Right ventricle myocardium inferior (tissue), 1 donor: ENCODE measurements at regions of chr2 and their contacts with region 1.

Region 1: GRCh38 chr2:55718165-55719008 is 24.7 kb upstream of the PNPT1 start:
- DNase-seq: no peak
- ATAC-seq: no peak

Region 2: GRCh38 chr2:56009758-56010458 is 291.5 kb after region 1 on chr2:
- intact Hi-C with region 1: loop called (anchors 2 kb)
- DNase-seq: no peak
- ATAC-seq: no peak

Region 3: GRCh38 chr2:56132138-56132537 is 413.8 kb after region 1 on chr2:
- intact Hi-C with region 1: loop called (anchors 2 kb)
- DNase-seq: no peak
- ATAC-seq: no peak

Region 4: GRCh38 chr2:56183643-56184499 is 465.5 kb after region 1 on chr2 and contains the start of gene CCDC85A:
- intact Hi-C with region 1: no loop called
- DNase-seq: peak; percentile 87
- ATAC-seq: peak; percentile 95
- total RNA-seq, gene CCDC85A: 5.3 TPM

Region 5: GRCh38 chr2:57510704-57511103 is 1792.3 kb after region 1 on chr2:
- intact Hi-C with region 1: loop called (anchors 5 kb)
- DNase-seq: no peak
- ATAC-seq: no peak